PC-9 (cell line): ENCODE measurements at regions of chr6 and their contacts with region 1.

Region 1: DNA sequence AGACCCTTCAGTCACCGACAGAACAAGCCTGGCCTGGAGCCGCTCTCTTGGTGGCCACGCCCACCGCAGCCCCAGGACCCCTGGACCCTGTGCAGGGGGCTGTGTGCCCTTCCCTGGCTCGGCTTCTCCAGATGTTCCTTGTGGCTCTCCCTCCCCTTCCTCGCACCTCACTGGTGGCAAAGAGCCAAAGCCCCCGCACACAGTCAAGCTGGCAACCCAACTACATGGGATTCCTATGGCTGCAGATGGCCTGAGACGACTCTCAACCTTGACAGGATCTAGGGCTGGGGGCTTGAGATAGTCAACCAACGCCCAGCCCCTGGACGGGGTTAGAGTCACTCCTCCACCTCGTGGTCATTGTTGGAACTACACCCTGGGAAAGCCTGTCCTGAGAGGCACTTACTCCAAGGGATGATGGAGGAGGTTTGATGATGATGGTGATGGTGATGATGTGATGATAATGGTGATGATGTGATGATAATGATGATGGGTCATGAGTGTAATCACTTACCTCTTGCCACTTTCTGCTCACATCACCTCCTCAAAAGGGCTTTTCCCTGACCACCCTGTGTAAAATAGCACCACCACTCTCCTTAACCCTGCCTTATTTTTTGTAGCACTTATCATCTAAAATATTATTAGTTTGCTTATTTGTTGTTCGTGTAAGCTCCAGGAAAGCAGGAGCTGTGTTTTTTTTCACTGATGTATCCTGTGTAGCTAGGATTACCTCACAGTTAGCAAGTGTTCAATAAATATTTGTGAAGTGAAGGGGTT is 278.4 kb downstream of the LRFN2 start:
- DNase-seq: peak in 1 of 2 experiments; percentile 13
- H3K4me3 ChIP-seq: no peak overlapping the region
- H3K27ac ChIP-seq: no peak overlapping the region
- H3K4me1 ChIP-seq: no peaks in the 10 kb centered on the region
- H3K27me3 ChIP-seq: peaks cover 23% of the 10 kb centered on the region
- CTCF ChIP-seq: peak; percentile 92

Region 2: DNA sequence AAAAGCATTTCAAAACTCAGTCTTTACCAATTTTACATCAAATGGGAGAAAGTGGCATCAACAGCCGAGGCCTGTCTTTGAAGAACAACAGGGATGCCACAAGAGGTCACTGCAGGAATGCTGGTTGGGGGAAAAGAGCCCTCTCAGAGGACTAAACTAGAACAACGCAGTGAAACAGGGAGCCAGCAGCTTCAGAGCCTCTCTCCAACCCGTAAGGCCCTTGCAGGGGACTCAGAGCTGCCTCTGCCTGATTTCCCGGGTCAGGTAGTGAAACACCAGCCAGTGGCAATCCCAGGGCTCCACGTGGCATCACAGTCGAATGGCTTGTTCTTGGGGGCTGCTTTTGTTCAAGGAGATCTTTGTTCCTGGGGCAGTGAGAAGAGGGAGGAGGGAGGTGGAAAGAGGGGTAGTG is 931.2 kb before region 1 on chr6:
- CTCF ChIA-PET with region 1: no interaction called
- POLR2A ChIA-PET with region 1: no interaction called
- intact Hi-C with region 1: loop called (anchors 2 kb)
- DNase-seq: peak in 1 of 2 experiments; percentile 46
- H3K4me3 ChIP-seq: no peak overlapping the region
- H3K27ac ChIP-seq: no peak overlapping the region
- H3K4me1 ChIP-seq: no peaks in the 10 kb centered on the region
- H3K27me3 ChIP-seq: peaks cover 57% of the 10 kb centered on the region
- CTCF ChIP-seq: peak; percentile 63

Region 3: GRCh38 chr6:40232698-40233097 is 76.0 kb before region 1 on chr6:
- CTCF ChIA-PET with region 1: no interaction called
- POLR2A ChIA-PET with region 1: no interaction called
- intact Hi-C with region 1: no loop called
- DNase-seq: no peak
- H3K4me3 ChIP-seq: no peak overlapping the region
- H3K27ac ChIP-seq: no peak overlapping the region
- H3K4me1 ChIP-seq: no peaks in the 10 kb centered on the region
- H3K27me3 ChIP-seq: peaks cover 9% of the 10 kb centered on the region; the same call in 1 of the 2 replicates
- CTCF ChIP-seq: no peak